Psoas muscle (tissue), 8 donors: ENCODE measurements at regions of chr3 and their contacts with region 1.

Region 1: GRCh38 chr3:128617557-128618397 is 32.8 kb downstream of the RPN1 start:
- DNase-seq: peak; percentile 98 to 99
- ATAC-seq: peak; percentile 97 to 99 (median 98)
- H3K4me3 ChIP-seq: peak overlapping the region; percentile 99
- H3K27ac ChIP-seq: peak overlapping the region; percentile 78
- H3K4me1 ChIP-seq: peaks cover 16% of the 10 kb centered on the region
- H3K27me3 ChIP-seq: no peaks in the 10 kb centered on the region
- CTCF ChIP-seq: peak; percentile 94

Region 2: DNA sequence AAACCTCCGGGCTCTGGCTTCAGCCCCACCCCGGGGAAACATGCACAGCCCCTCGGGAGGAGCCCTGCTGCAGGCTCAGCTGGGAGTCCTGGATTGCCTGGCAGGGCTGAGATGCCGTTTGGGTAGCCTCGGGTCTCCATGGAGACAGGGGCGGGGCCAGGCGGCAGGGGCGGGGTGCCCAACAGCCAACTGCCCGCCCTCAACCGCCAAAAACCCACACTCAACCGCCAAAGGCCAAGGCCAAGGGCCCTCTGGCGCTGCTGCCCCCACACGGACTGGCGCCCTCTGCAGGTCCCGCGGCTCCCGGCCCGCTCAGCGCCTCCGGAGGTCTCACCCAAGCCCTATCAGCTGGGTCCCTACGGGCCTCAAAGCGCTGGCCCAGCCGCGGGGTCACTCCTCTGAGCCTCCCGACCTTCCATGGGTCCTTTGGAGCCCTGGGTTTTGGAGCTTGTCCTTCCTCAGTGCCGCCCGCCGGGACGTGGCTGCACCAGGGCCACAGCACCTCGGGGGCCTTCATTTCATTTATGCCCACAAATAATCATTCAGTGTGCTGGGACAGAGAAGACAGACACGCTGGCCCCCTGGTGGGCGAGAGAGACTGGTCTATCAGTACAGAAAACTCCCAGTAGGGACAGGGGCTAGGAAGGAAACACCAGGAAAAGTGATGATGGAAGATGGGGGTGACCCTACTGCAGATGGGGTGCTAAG is 228.2 kb after region 1 on chr3:
- intact Hi-C with region 1: loop called in 1 of 2 experiments (anchors 2 kb)
- DNase-seq: peak; percentile 88 to 96
- ATAC-seq: peak; percentile 94 to 97 (median 96)
- H3K4me3 ChIP-seq: peak overlapping the region; percentile 66
- H3K27ac ChIP-seq: peak overlapping the region; percentile 81
- H3K4me1 ChIP-seq: peaks cover 12% of the 10 kb centered on the region
- H3K27me3 ChIP-seq: no peaks in the 10 kb centered on the region
- CTCF ChIP-seq: peak; percentile 67

Region 3: DNA sequence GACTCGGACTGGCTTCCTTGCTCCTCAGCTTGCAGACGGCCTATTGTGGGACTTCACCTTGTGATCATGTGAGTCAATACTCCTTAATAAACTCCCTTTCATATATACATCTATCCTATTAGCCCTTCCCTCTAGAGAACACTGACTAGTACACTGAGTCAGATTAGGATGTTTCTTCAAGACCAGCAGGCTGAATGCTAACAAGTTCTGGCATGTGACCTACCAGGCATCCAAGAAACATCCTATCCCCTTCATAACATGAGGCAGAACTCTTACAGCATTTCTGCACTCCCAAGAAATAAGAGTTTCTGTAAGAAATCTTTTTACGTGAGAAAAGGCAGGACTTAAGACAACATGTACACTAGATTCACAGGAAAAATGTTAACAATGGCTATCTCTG is 366.8 kb after region 1 on chr3:
- intact Hi-C with region 1: no loop called
- DNase-seq: no peak
- ATAC-seq: no peak
- H3K4me3 ChIP-seq: no peak overlapping the region
- H3K27ac ChIP-seq: no peak overlapping the region
- H3K4me1 ChIP-seq: no peaks in the 10 kb centered on the region
- H3K27me3 ChIP-seq: no peaks in the 10 kb centered on the region
- CTCF ChIP-seq: no peak